CD4-positive, alpha-beta T cell (primary cell): ENCODE measurements at regions of chr19 and their contacts with region 1.

Region 1: GRCh38 chr19:17932485-17933338 is at the start of gene CCDC124:
- DNase-seq: peak; percentile 84 to 97 (median 92)
- ATAC-seq: peak; percentile 95
- H3K4me3 ChIP-seq: peak within 1 kb of the TSS; percentile 76
- H3K4me3 Mint-ChIP-seq: peak within 1 kb of the TSS; percentile 94
- H3K27ac ChIP-seq: peak within 1 kb of the TSS; percentile 81 to 93
- H3K27ac Mint-ChIP-seq: peak within 1 kb of the TSS; percentile 96
- H3K4me1 ChIP-seq: peaks cover 22% of the 10 kb centered on the region
- H3K4me1 Mint-ChIP-seq: peaks cover 19% of the 10 kb centered on the region
- H3K27me3 ChIP-seq: no peaks in the 10 kb centered on the region
- H3K27me3 Mint-ChIP-seq: no peaks in the 10 kb centered on the region
- CTCF ChIP-seq: peak; percentile 83
- total RNA-seq, gene CCDC124: 26.9 to 28.1 TPM

Region 2: DNA sequence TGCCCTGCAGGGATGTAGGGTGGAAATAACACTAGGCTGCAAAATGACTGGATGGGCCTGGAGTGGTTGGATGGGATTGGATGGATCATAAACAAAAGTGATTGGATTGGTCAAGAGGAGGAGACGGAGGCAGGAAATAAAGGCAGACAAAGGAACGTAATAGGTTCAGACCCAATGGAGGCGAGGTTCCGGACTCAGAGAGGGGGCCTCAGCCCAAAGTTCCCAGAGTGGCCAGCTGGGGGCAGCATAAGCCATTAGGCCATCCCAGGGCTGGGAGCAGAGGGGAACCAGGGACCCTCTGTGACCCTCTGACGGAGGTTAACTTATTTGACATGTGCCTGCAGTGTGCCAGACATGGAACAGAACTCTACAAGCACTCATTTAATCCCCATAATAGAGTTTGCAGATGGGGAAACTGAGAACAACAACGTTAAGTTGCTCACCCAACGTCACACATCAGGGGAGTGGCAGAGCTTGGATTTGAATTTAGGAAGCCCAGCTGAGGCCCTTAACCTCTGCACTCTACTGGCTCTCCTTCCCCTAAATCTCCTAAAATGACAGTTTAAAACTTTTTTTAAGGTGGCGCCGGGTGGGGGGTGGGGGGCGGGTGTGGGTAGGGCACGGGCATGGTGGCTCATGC is 228.8 kb before region 1 on chr19:
- CTCF ChIA-PET with region 1: no interaction called
- POLR2A ChIA-PET with region 1: no interaction called
- intact Hi-C with region 1: loop called in 1 of 2 experiments (anchors 2 kb)
- DNase-seq: peak; percentile 63 to 80 (median 66)
- ATAC-seq: peak; percentile 99
- H3K4me3 ChIP-seq: no peak overlapping the region
- H3K4me3 Mint-ChIP-seq: no peak overlapping the region
- H3K27ac ChIP-seq: no peak overlapping the region
- H3K27ac Mint-ChIP-seq: no peak overlapping the region
- H3K4me1 ChIP-seq: peaks cover 4% of the 10 kb centered on the region
- H3K4me1 Mint-ChIP-seq: peaks cover 4% of the 10 kb centered on the region
- H3K27me3 ChIP-seq: peaks cover 2 to 4% of the 10 kb centered on the region in 2 experiments
- H3K27me3 Mint-ChIP-seq: peaks cover 6% of the 10 kb centered on the region
- CTCF ChIP-seq: peak; percentile 93

Region 3: GRCh38 chr19:17784201-17785008 is 148.3 kb before region 1 on chr19:
- CTCF ChIA-PET with region 1: interaction called, 4 read pairs
- POLR2A ChIA-PET with region 1: no interaction called
- intact Hi-C with region 1: loop called in 1 of 2 experiments (anchors 5 kb)
- DNase-seq: peak; percentile 62 to 86 (median 72)
- ATAC-seq: peak; percentile 95
- H3K4me3 ChIP-seq: no peak overlapping the region
- H3K4me3 Mint-ChIP-seq: no peak overlapping the region
- H3K27ac ChIP-seq: no peak overlapping the region
- H3K27ac Mint-ChIP-seq: peak overlapping the region; percentile 18
- H3K4me1 ChIP-seq: peaks cover 10% of the 10 kb centered on the region
- H3K4me1 Mint-ChIP-seq: peaks cover 15% of the 10 kb centered on the region
- H3K27me3 ChIP-seq: no peaks in the 10 kb centered on the region
- H3K27me3 Mint-ChIP-seq: no peaks in the 10 kb centered on the region
- CTCF ChIP-seq: peak; percentile 71

Region 4: DNA sequence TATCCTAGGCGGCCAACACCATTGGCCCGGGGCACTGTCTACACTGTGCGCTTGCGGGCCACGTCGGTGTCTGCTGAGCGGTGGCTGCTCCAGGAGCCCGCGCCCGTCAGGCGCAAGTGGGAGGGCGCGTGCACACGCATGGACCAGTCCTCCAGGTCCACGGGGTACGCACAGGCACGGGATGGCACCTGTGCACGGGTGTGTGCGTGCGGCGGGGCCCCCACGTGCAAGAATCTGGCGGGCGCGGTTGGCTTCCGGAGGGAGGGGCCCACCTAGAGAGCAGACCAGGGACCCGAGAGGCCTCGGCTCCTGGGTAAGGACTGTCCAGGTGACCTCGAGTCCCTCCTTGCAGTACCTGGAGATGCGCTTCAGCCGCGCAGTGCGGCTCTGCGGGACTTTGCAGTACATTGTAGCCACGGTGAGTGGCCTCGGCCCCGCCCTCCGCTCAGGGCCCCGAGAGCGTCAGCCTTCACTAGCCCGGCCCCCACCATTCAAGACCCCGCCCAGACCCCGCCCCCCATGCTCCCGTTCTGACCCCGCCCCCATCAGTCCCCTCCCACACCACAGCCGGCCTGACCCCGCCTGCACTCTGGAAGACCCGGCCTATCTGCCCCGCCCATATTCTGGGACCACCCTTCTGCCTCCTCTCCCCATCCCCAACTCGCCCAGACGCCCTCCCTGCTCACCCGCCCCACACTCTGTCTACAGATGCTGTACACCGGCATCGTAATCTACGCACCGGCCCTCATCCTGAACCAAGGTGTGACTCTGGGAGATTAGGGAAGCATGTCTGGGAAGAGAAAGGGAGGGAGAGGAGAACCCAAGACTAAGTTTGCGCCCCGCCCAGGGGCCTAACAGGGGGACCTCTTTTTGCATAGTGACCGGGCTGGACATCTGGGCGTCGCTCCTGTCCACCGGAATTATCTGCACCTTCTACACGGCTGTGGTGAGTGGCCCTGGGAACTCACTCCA is 58.6 kb before region 1 on chr19:
- CTCF ChIA-PET with region 1: interaction called, 8 read pairs
- POLR2A ChIA-PET with region 1: interaction called, 28 read pairs
- intact Hi-C with region 1: loop called in 1 of 2 experiments (anchors 2 kb)
- DNase-seq: peak; percentile 49 to 88 (median 62)
- ATAC-seq: peak; percentile 80
- H3K4me3 ChIP-seq: peak overlapping the region; percentile 62
- H3K4me3 Mint-ChIP-seq: peak overlapping the region; percentile 85
- H3K27ac ChIP-seq: no peak overlapping the region
- H3K27ac Mint-ChIP-seq: peak overlapping the region; percentile 70
- H3K4me1 ChIP-seq: peaks cover 35% of the 10 kb centered on the region
- H3K4me1 Mint-ChIP-seq: peaks cover 19% of the 10 kb centered on the region
- H3K27me3 ChIP-seq: no peaks in the 10 kb centered on the region
- H3K27me3 Mint-ChIP-seq: no peaks in the 10 kb centered on the region
- CTCF ChIP-seq: no peak

Region 5: GRCh38 chr19:17966550-17967256 is 34.0 kb after region 1 on chr19 and contains the start of gene KCNN1:
- CTCF ChIA-PET with region 1: no interaction called
- POLR2A ChIA-PET with region 1: no interaction called
- intact Hi-C with region 1: no loop called
- DNase-seq: peak in 2 of 14 experiments; percentile 25 to 29
- ATAC-seq: no peak
- H3K4me3 ChIP-seq: no peak within 1 kb of the TSS
- H3K4me3 Mint-ChIP-seq: peak within 1 kb of the TSS; percentile 34
- H3K27ac ChIP-seq: no peak within 1 kb of the TSS
- H3K27ac Mint-ChIP-seq: no peak within 1 kb of the TSS
- H3K4me1 ChIP-seq: peaks cover 13% of the 10 kb centered on the region
- H3K4me1 Mint-ChIP-seq: peaks cover 9% of the 10 kb centered on the region
- H3K27me3 ChIP-seq: peaks cover 30% of the 10 kb centered on the region in 2 experiments
- H3K27me3 Mint-ChIP-seq: peaks cover 56% of the 10 kb centered on the region
- CTCF ChIP-seq: no peak
- total RNA-seq, gene KCNN1: not detected

Region 6: GRCh38 chr19:18014197-18014596 is 81.5 kb after region 1 on chr19:
- CTCF ChIA-PET with region 1: no interaction called
- POLR2A ChIA-PET with region 1: no interaction called
- intact Hi-C with region 1: no loop called
- DNase-seq: peak in 13 of 14 experiments; percentile 49 to 84 (median 72)
- ATAC-seq: peak; percentile 83
- H3K4me3 ChIP-seq: no peak overlapping the region
- H3K4me3 Mint-ChIP-seq: peak overlapping the region; percentile 81
- H3K27ac ChIP-seq: peak overlapping the region; percentile 74 to 78
- H3K27ac Mint-ChIP-seq: peak overlapping the region; percentile 97
- H3K4me1 ChIP-seq: peaks cover 74% of the 10 kb centered on the region
- H3K4me1 Mint-ChIP-seq: peaks cover 59% of the 10 kb centered on the region
- H3K27me3 ChIP-seq: no peaks in the 10 kb centered on the region
- H3K27me3 Mint-ChIP-seq: no peaks in the 10 kb centered on the region
- CTCF ChIP-seq: no peak

Region 7: DNA sequence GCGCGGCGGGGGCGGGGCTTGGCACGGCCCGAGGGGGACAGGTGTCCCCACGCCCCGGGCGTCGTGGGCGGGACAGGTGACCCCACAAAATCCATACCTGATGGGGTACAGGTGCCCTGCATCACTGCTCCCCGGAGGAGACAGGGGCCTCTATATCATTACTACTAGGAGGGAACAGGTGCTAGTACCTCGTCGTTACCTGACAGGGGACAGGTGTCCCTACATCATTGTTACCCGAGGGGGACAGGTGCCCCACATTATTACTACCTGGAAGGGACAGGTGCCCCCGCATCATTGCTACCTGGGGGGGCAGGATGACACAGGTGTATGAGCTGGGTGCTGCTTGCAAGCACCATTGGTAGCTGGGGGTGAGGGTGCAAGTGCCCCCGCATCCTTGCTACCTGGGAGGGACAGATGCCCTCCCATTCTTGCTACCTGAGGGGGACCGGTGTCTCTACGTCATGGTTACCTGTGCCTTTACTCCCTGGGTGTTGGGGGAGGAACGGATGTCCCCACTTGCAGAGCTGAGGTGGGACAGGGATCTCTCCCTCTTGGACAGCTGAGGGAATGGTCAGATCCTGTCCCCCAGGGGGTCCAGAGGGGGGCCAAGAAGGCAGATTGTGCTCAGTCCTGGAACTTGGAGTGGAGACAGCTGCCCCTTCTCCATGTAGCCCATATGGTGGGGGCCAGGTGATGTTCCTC is 751.4 kb after region 1 on chr19:
- CTCF ChIA-PET with region 1: no interaction called
- POLR2A ChIA-PET with region 1: no interaction called
- intact Hi-C with region 1: no loop called
- DNase-seq: no peak
- ATAC-seq: peak; percentile 35
- H3K4me3 ChIP-seq: peak overlapping the region; percentile 69
- H3K4me3 Mint-ChIP-seq: peak overlapping the region; percentile 78
- H3K27ac ChIP-seq: no peak overlapping the region
- H3K27ac Mint-ChIP-seq: peak overlapping the region; percentile 77
- H3K4me1 ChIP-seq: peaks cover 30% of the 10 kb centered on the region
- H3K4me1 Mint-ChIP-seq: peaks cover 36% of the 10 kb centered on the region
- H3K27me3 ChIP-seq: no peaks in the 10 kb centered on the region
- H3K27me3 Mint-ChIP-seq: no peaks in the 10 kb centered on the region
- CTCF ChIP-seq: no peak